ENCODE measurements at regions of chr12 and their contacts with region 1.

Region 1: DNA sequence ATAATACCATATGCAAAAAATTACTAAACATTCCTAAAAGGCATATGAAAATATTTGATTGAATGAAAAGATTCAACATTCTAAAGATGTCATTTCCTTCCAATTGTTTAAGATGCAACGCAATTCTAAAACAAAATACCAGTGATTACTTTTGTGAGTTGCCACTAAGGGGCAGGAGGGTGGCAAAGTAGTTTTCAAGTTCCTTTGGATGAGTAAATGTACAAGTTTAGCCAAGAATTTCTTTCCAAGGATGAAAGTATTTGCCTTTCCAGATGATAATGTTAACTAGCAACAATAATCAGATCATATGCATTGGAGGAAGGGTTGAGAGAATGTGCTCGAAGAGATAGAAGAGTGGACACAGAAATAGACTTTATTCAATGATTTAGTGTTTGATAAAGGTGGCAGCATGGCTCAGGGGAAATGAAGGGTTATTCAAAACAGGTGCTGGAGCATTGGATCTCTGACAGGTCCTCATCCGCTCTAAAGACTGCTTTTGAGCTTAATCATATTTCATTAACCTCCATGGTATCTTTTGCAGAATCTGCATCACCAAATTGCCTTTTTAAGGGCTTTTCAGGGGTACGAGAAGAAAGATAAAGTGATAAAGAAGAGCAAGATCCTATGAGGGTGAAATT is 678.5 kb upstream of the TBX3 start:
- DNase-seq: no peak
- H3K4me3 ChIP-seq: no peak overlapping the region
- H3K27ac ChIP-seq: no peak overlapping the region
- H3K27me3 ChIP-seq: no peaks in the 10 kb centered on the region
- CTCF ChIP-seq: peak; percentile 23; the same call in 1 of the 2 replicates

Region 2: DNA sequence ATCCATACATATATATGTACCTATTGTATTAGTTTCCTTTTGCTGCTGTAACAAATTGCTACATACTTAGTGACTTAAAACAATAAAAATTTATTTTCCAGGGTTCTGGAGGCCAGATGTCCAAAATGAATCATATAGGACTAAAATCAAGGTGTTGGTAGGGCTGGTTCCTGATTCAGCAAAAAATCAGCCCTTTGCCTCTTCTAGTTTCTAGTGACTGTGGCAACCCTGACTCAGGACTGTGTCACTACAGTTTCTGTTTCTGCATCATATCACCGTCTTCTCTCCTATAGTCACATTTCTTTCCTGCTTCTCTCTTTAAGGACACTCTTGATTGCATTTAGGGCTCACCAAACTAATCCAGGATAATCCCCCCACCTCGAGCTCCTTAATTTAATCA is 292.1 kb before region 1 on chr12:
- CTCF ChIA-PET with region 1: no interaction called
- POLR2A ChIA-PET with region 1: no interaction called
- DNase-seq: no peak
- H3K4me3 ChIP-seq: no peak overlapping the region
- H3K27ac ChIP-seq: no peak overlapping the region
- H3K27me3 ChIP-seq: no peaks in the 10 kb centered on the region
- CTCF ChIP-seq: no peak

Region 3: GRCh38 chr12:115199831-115200230 is 162.6 kb before region 1 on chr12:
- CTCF ChIA-PET with region 1: no interaction called
- POLR2A ChIA-PET with region 1: no interaction called
- DNase-seq: peak; percentile 42
- H3K4me3 ChIP-seq: no peak overlapping the region
- H3K27ac ChIP-seq: no peak overlapping the region
- H3K27me3 ChIP-seq: no peaks in the 10 kb centered on the region
- CTCF ChIP-seq: no peak

Region 4: GRCh38 chr12:115375186-115375991 is 12.9 kb after region 1 on chr12:
- CTCF ChIA-PET with region 1: no interaction called
- POLR2A ChIA-PET with region 1: no interaction called
- DNase-seq: no peak
- H3K4me3 ChIP-seq: no peak overlapping the region
- H3K27ac ChIP-seq: peak overlapping the region; percentile 65
- H3K27me3 ChIP-seq: no peaks in the 10 kb centered on the region
- CTCF ChIP-seq: no peak

Region 5: GRCh38 chr12:115440438-115440837 is 78.0 kb after region 1 on chr12:
- CTCF ChIA-PET with region 1: no interaction called
- POLR2A ChIA-PET with region 1: no interaction called
- DNase-seq: no peak
- H3K4me3 ChIP-seq: no peak overlapping the region
- H3K27ac ChIP-seq: no peak overlapping the region
- H3K27me3 ChIP-seq: no peaks in the 10 kb centered on the region
- CTCF ChIP-seq: no peak

Region 6: GRCh38 chr12:115468087-115468510 is 105.6 kb after region 1 on chr12:
- CTCF ChIA-PET with region 1: no interaction called
- POLR2A ChIA-PET with region 1: interaction called, 11 read pairs
- DNase-seq: no peak
- H3K4me3 ChIP-seq: no peak overlapping the region
- H3K27ac ChIP-seq: no peak overlapping the region
- H3K27me3 ChIP-seq: no peaks in the 10 kb centered on the region
- CTCF ChIP-seq: peak; percentile 59

Measured in AG04450 (cell line).